HCT116 (cell line): ENCODE measurements at regions of chr1 and their contacts with region 1.

Region 1: GRCh38 chr1:11037740-11038182 is 9.3 kb downstream of the MASP2 start:
- DNase-seq: peak; percentile 76
- ATAC-seq: peak; percentile 97
- H3K4me3 ChIP-seq: no peak overlapping the region
- H3K27ac ChIP-seq: no peak overlapping the region
- H3K4me1 ChIP-seq: peaks cover 0 to 7% of the 10 kb centered on the region in 2 experiments; a peak in 1 of 4 replicates
- H3K27me3 ChIP-seq: no peaks in the 10 kb centered on the region
- CTCF ChIP-seq: peak; percentile 92 to 99 (median 98)
- POLR2A ChIP-seq: no peak
- RAD21 ChIP-seq: peak; percentile 99

Region 2: GRCh38 chr1:10901086-10901890 is 136.5 kb before region 1 on chr1:
- CTCF ChIA-PET with region 1: no interaction called
- POLR2A ChIA-PET with region 1: no interaction called
- RAD21 ChIA-PET with region 1: no interaction called
- intact Hi-C with region 1: no loop called
- DNase-seq: no peak
- ATAC-seq: peak; percentile 67
- H3K4me3 ChIP-seq: peak overlapping the region; percentile 38 to 54
- H3K27ac ChIP-seq: peak overlapping the region; percentile 58
- H3K4me1 ChIP-seq: peaks cover 22 to 46% of the 10 kb centered on the region in 2 experiments; a peak in 3 of 4 replicates
- H3K27me3 ChIP-seq: no peaks in the 10 kb centered on the region
- CTCF ChIP-seq: no peak
- POLR2A ChIP-seq: no peak
- RAD21 ChIP-seq: no peak

Region 3: DNA sequence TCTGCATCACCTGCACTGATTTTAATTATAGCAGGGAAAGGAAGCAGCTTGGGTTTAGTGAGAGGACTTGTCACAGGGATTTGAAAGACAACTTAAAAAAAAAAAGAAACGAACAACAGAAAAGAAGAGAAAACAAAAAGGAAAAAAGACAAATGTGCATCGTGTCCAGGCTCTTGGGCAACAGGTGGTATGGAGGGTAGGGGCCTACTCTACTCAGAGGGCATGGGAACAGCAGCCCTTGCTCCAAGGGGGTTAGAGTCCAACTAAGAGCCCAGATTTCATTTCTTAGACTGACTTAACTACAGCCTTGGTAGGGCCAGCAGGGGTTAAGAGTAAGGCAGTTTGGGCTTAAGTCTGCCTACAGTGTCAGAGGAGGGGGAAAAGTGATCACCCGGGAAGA is 77.2 kb after region 1 on chr1:
- CTCF ChIA-PET with region 1: no interaction called
- POLR2A ChIA-PET with region 1: no interaction called
- RAD21 ChIA-PET with region 1: no interaction called
- intact Hi-C with region 1: no loop called
- DNase-seq: no peak
- ATAC-seq: no peak
- H3K4me3 ChIP-seq: no peak overlapping the region
- H3K27ac ChIP-seq: no peak overlapping the region
- H3K4me1 ChIP-seq: no peaks in the 10 kb centered on the region
- H3K27me3 ChIP-seq: no peaks in the 10 kb centered on the region
- CTCF ChIP-seq: no peak
- POLR2A ChIP-seq: no peak
- RAD21 ChIP-seq: no peak

Region 4: DNA sequence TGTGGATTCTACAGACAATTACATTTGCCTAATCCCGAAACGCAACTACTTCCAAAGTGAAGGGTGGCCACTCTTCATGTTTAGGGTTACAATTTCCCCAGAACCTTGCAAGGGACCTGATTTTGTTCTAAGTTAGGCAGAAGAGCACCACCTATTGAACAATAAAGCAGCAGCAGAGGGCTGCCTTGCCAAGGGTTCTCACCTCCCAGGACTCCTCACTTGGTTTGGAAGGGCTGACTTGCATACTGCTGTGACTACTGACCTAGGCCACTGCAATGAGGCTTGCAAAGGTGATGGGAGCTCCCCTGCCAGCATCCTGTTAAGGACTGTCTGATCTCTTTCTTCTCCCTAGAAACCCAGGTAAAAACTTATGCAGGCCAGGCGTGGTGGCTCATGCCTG is 210.4 kb after region 1 on chr1:
- CTCF ChIA-PET with region 1: interaction called, 3 read pairs
- POLR2A ChIA-PET with region 1: no interaction called
- RAD21 ChIA-PET with region 1: no interaction called
- intact Hi-C with region 1: loop called (anchors 5 kb)
- DNase-seq: no peak
- ATAC-seq: peak; percentile 66; the same call in 1 of the 2 replicates
- H3K4me3 ChIP-seq: no peak overlapping the region
- H3K27ac ChIP-seq: no peak overlapping the region
- H3K4me1 ChIP-seq: no peaks in the 10 kb centered on the region
- H3K27me3 ChIP-seq: no peaks in the 10 kb centered on the region
- CTCF ChIP-seq: no peak
- POLR2A ChIP-seq: no peak
- RAD21 ChIP-seq: no peak

Region 5: DNA sequence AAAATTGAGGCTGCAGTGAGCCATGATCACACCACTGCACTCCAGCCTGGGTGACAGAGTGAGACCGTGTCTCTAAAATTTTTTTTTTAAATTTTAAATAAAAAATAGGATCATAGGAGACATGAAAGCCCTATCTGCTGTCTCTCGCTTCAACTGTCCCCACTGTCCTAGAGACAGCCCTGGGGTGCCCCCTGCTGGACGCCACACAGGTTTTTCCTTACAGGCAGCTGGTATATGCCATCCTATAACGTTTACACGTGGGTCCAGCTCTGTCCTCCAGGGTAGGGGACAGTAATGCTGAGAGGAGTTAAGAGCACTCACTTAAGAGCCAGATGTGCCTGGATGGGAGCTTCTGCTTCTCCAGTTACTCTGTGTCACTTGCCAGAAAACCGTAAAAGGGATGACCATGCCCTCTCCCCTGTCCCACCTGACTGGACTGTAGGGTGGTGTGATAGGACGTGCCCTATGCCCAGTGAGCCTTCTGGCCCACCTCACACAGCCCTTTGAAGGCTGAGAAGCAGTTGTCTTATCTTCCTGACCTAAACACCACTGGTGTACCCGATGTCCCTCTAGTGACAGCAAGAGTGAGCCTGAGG is 608.0 kb after region 1 on chr1:
- CTCF ChIA-PET with region 1: interaction called, 29 read pairs
- POLR2A ChIA-PET with region 1: no interaction called
- RAD21 ChIA-PET with region 1: interaction called, 3 to 9 read pairs
- intact Hi-C with region 1: loop called (anchors 1 kb)
- DNase-seq: peak; percentile 62
- ATAC-seq: peak; percentile 78
- H3K4me3 ChIP-seq: no peak overlapping the region
- H3K27ac ChIP-seq: no peak overlapping the region
- H3K4me1 ChIP-seq: peaks cover 2 to 14% of the 10 kb centered on the region in 2 experiments; a peak in 3 of 4 replicates
- H3K27me3 ChIP-seq: no peaks in the 10 kb centered on the region
- CTCF ChIP-seq: peak in 2 of 3 experiments; percentile 73 to 87; a peak in 4 of 6 replicates
- POLR2A ChIP-seq: no peak
- RAD21 ChIP-seq: no peak

Region 6: GRCh38 chr1:11719313-11720032 is 681.7 kb after region 1 on chr1:
- CTCF ChIA-PET with region 1: interaction called, 3 read pairs
- POLR2A ChIA-PET with region 1: no interaction called
- RAD21 ChIA-PET with region 1: no interaction called
- intact Hi-C with region 1: loop called (anchors 5 kb)
- DNase-seq: no peak
- ATAC-seq: peak; percentile 78
- H3K4me3 ChIP-seq: no peak overlapping the region
- H3K27ac ChIP-seq: no peak overlapping the region
- H3K4me1 ChIP-seq: peaks cover 0 to 16% of the 10 kb centered on the region in 2 experiments; a peak in 2 of 4 replicates
- H3K27me3 ChIP-seq: no peaks in the 10 kb centered on the region
- CTCF ChIP-seq: peak; percentile 91 to 98 (median 97)
- POLR2A ChIP-seq: no peak
- RAD21 ChIP-seq: peak; percentile 99

Region 7: GRCh38 chr1:11893907-11894251 is 856.1 kb after region 1 on chr1:
- CTCF ChIA-PET with region 1: no interaction called
- POLR2A ChIA-PET with region 1: no interaction called
- RAD21 ChIA-PET with region 1: no interaction called
- intact Hi-C with region 1: loop called (anchors 5 kb)
- DNase-seq: peak; percentile 34
- ATAC-seq: peak; percentile 99
- H3K4me3 ChIP-seq: no peak overlapping the region
- H3K27ac ChIP-seq: no peak overlapping the region
- H3K4me1 ChIP-seq: peaks cover 3 to 11% of the 10 kb centered on the region in 2 experiments
- H3K27me3 ChIP-seq: no peaks in the 10 kb centered on the region
- CTCF ChIP-seq: peak; percentile 93 to 99 (median 98)
- POLR2A ChIP-seq: no peak
- RAD21 ChIP-seq: peak; percentile 94